PC-9 (cell line): ENCODE measurements at regions of chr1 and their contacts with region 1.

Region 1: DNA sequence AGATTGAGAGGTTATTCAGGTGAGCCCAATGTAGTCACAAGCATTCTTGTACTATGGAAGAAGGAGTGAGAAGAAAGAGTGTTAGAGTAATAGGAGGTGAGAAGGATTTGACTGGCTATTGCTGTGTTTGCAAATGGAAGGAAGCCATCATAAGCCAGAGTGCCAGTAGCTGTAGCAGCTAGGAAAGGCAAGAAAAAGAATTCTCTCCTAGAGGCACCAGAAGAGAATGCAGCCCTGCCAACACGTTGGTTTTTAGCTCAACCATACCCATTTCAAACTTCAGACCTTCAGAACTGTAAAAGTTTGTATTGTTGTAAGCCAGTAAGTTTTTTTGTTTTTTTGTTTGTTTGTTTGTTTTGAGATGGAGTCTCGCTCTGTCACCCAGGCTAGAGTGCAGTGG is 8.9 kb upstream of the IL12RB2 start:
- DNase-seq: no peak
- H3K4me3 ChIP-seq: no peak overlapping the region
- H3K27ac ChIP-seq: no peak overlapping the region
- H3K4me1 ChIP-seq: no peaks in the 10 kb centered on the region; the same call in 1 of the 2 replicates
- H3K27me3 ChIP-seq: no peaks in the 10 kb centered on the region
- CTCF ChIP-seq: no peak

Region 2: DNA sequence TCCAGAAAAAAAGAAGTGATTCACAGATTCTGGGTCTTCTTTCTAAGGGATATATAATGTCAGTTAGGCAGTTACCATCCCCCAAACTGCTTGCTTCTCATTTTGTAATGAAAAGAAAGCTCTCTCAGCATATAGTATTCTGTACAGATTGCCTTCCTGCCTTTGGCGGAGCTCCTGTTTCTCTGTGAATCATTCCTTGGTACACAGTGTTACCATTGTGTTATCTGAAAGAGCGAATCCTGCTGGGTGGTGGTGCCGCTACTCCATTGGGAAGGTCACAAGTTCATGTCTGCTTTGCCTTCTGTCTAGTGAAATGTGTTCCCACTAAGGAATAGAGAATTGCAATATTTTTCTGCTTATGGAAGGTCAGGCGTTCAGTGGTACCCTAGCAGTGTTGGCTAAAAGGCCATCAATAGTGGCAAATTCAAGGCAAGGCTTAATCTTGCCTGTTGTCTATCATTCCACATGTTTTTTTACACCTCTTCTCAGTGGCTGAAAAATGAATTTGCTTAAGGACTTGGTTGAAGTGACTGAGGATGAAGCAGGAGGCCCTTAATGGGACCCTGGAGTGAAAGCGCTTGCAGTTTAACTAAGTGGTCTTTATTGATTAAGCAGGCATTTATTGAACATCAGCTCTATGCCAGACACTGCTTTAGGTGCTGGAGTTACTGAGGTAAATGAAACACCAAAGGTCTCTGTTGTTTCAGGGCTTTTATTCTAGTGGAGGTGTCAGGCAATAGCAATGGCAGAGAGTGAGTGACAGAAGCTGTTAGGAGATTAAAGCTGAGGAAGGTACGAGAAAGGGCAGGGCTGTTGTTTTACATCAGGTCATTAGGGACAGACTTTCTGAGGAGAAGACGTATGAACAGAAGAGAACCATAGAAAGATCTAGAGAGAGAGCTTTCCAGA is 1319.4 kb before region 1 on chr1:
- CTCF ChIA-PET with region 1: interaction called, 11 read pairs
- POLR2A ChIA-PET with region 1: no interaction called
- intact Hi-C with region 1: no loop called
- DNase-seq: no peak
- H3K4me3 ChIP-seq: no peak overlapping the region
- H3K27ac ChIP-seq: no peak overlapping the region
- H3K4me1 ChIP-seq: no peaks in the 10 kb centered on the region
- H3K27me3 ChIP-seq: no peaks in the 10 kb centered on the region
- CTCF ChIP-seq: no peak

Region 3: DNA sequence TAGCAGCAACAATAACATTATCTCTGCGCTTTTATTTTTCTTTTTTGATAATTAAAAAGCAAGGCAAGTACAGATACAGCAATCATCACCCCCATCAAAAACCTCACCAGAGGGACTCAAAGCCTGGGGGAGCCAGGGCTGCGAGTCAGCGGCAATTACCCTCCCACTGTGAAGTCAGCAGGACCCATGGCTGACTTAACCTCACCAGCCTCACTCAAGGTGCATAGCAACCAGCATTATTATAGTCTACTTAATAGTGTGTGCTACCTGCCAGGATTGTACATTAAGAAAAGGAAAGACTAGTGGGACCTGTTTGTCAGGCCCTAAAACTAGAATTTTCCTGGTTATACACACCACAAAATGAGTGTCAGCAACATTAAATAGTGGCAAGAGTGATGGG is 160.3 kb after region 1 on chr1:
- CTCF ChIA-PET with region 1: no interaction called
- POLR2A ChIA-PET with region 1: interaction called, 16 read pairs
- intact Hi-C with region 1: no loop called
- DNase-seq: peak; percentile 11 to 64
- H3K4me3 ChIP-seq: no peak overlapping the region
- H3K27ac ChIP-seq: no peak overlapping the region
- H3K4me1 ChIP-seq: 0 out of 2 replicates have a peak, but pooled peaks cover 5% of the 10 kb centered on the region
- H3K27me3 ChIP-seq: no peaks in the 10 kb centered on the region
- CTCF ChIP-seq: no peak